ENCODE measurements at regions of chr1 and their contacts with region 1.

Region 1: DNA sequence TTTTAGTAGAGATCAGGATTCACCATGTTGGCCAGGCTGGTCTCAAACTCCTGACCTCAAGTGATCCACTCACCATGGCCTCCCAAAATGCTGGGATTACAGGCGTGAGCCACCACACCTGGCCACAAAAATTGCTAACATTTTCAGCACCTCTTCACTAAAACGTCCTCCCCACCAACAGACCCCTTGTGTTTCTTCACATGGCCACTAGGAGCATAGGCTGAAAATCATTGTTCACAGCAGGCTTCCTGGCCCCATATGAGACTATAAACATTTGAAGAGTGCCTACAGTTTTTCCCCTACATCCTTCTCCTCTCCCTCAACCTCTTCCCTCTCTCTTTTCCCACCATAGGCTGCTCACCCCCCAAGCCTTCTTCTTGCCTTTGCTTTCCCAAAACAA is 28.0 kb upstream of the SFPQ start:
- DNase-seq: no peak
- ATAC-seq: no peak; the same call in 1 of the 2 replicates
- H3K4me3 ChIP-seq: no peak overlapping the region
- H3K27ac ChIP-seq: no peak overlapping the region
- H3K4me1 ChIP-seq: peaks cover 13% of the 10 kb centered on the region
- H3K27me3 ChIP-seq: no peaks in the 10 kb centered on the region
- CTCF ChIP-seq: peak; percentile 30; the same call in 1 of the 2 replicates
- POLR2A ChIP-seq: no peak
- RAD21 ChIP-seq: no peak

Region 2: DNA sequence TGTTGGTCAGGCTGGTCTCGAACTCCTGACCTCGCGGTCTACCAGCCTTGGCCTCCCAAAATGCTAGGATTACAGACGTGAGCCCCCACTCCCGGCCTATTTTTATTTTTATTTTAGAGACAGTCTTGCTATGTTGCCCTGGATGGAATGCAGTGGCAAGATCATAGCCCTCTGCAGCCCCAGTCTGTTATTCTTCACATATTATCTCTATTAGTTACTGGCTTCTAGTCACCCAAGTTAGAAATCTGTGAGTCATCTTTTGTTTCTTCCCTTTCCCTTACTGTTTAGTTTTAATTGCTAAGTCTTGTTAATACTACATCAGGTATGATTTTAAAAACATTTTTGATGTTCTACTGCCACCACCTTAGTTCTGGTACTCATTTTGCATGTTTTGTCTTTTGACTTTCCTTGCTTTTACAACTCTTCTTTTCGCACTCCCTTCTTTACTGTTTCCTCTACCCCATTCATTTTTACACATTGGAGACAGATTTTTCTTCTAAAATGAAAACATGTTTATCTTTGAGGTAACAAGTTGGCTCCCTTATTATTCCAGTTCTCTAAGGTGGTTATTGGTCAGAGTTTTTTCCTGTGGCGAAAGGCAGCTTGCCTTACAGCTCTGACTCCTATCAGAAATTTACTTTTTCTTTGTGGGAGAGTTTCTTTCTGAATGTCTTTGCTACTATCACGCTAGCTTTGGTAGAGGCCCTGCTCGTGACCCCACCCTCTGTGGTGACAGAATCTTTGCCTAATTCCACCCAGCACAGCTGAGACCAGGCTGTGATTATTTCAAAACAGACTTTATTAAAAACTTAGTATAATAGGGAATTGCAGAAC is 67.0 kb after region 1 on chr1:
- CTCF ChIA-PET with region 1: no interaction called
- POLR2A ChIA-PET with region 1: no interaction called
- dilution Hi-C with region 1: no loop called
- in situ Hi-C with region 1: no loop called
- intact Hi-C with region 1: loop called (anchors 5 kb)
- DNase-seq: peak; percentile 63
- ATAC-seq: peak; percentile 92
- H3K4me3 ChIP-seq: no peak overlapping the region
- H3K27ac ChIP-seq: 0 out of 2 replicates have a peak overlapping the region, but pooled peaks have one; percentile 23
- H3K4me1 ChIP-seq: peaks cover 7% of the 10 kb centered on the region
- H3K27me3 ChIP-seq: no peaks in the 10 kb centered on the region
- CTCF ChIP-seq: no peak
- POLR2A ChIP-seq: no peak
- RAD21 ChIP-seq: no peak

Measured in IMR-90 (cell line).